ENCODE measurements at regions of chr11 and their contacts with region 1.

Region 1: GRCh38 chr11:59097113-59097708 is 9.8 kb upstream of the FAM111B start:
- DNase-seq: peak; percentile 80
- H3K4me3 ChIP-seq: peak overlapping the region; percentile 71
- H3K27ac ChIP-seq: peak overlapping the region; percentile 87
- H3K4me1 ChIP-seq: peaks cover 93% of the 10 kb centered on the region
- CTCF ChIP-seq: peak; percentile 83

Region 2: GRCh38 chr11:57515332-57516060 is 1581.7 kb before region 1 on chr11 and contains the start of gene SLC43A1:
- CTCF ChIA-PET with region 1: no interaction called
- POLR2A ChIA-PET with region 1: no interaction called
- intact Hi-C with region 1: loop called (anchors 10 kb)
- DNase-seq: peak; percentile 63
- H3K4me3 ChIP-seq: peak within 1 kb of the TSS; percentile 91
- H3K27ac ChIP-seq: peak within 1 kb of the TSS; percentile 65
- H3K4me1 ChIP-seq: peaks cover 43% of the 10 kb centered on the region
- CTCF ChIP-seq: 0 out of 2 replicates have a peak, but pooled peaks have one; percentile 31
- total RNA-seq, gene SLC43A1: 47.1 and 61.1 TPM in 2 replicates

Region 3: GRCh38 chr11:59076876-59077571 is 20.2 kb before region 1 on chr11:
- CTCF ChIA-PET with region 1: no interaction called
- POLR2A ChIA-PET with region 1: interaction called, 12 read pairs
- intact Hi-C with region 1: loop called (anchors 2 kb)
- DNase-seq: peak; percentile 87
- H3K4me3 ChIP-seq: peak overlapping the region; percentile 46
- H3K27ac ChIP-seq: peak overlapping the region; percentile 80
- H3K4me1 ChIP-seq: peaks cover 47% of the 10 kb centered on the region
- CTCF ChIP-seq: no peak

Region 4: DNA sequence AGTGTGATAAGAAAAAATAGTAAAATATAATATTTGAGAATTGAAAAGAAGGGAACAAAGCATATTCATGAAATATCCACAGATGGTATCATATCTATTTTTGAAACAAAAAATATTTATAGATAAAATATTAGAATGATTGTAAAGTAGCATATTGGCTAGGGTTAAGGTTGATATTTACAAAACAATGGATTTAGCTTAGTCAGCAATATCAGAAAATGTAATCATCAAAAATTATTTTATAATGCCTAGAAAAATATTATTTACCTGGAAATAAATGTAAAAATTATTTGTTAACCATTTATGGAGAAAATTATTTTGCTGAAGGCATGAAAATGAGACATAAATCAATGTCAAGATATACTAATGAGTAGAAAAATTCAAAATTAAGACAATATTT is 22.6 kb after region 1 on chr11:
- CTCF ChIA-PET with region 1: no interaction called
- POLR2A ChIA-PET with region 1: no interaction called
- intact Hi-C with region 1: no loop called
- DNase-seq: no peak
- H3K4me3 ChIP-seq: no peak overlapping the region
- H3K27ac ChIP-seq: no peak overlapping the region
- H3K4me1 ChIP-seq: no peaks in the 10 kb centered on the region
- CTCF ChIP-seq: no peak

Measured in OCI-LY7 (cell line).